Left cardiac atrium (tissue), 4 donors: ENCODE measurements at regions of chr1 and their contacts with region 1.

Region 1: GRCh38 chr1:202745323-202745888 is 35.2 kb upstream of the SYT2 start:
- DNase-seq: no peak
- ATAC-seq: no peak

Region 2: DNA sequence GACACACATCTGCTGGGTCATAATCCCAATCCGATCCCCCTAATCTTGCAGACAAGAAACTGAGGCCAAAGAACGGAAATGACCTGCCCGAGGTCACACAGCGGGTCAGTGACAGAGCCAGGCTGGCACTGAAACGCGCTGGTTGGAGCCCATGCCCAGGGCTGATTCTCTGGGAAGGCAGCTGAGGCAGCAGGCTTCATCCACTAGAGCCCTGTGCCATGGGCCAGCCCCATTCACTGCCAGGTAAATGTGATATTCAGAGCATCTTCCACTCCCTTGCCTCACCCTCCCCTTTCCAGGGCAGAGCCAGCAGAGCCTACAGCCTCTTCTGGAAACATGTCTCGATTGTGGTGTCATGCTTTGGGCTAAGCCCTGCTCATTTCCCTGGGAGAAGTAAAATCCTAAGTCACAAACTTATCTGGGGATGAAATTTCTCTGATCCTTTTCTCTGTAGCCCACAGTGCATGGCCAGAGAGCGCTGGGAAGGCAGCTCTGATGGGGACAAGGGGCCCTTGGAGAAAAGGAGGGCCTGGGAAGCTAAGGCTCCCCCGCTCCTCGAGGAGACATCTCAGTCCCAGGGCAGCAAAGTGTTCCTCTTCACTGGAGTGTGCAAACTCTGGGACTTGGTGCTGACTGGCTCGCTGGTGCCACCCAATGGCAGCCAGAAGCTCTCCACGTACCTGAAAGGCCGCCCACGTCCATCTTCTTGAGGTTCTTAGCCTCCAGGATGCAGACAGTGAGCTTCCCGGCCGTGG is 145.6 kb before region 1 on chr1:
- intact Hi-C with region 1: no loop called
- DNase-seq: peak; percentile 53
- ATAC-seq: peak; percentile 80 to 91

Region 3: DNA sequence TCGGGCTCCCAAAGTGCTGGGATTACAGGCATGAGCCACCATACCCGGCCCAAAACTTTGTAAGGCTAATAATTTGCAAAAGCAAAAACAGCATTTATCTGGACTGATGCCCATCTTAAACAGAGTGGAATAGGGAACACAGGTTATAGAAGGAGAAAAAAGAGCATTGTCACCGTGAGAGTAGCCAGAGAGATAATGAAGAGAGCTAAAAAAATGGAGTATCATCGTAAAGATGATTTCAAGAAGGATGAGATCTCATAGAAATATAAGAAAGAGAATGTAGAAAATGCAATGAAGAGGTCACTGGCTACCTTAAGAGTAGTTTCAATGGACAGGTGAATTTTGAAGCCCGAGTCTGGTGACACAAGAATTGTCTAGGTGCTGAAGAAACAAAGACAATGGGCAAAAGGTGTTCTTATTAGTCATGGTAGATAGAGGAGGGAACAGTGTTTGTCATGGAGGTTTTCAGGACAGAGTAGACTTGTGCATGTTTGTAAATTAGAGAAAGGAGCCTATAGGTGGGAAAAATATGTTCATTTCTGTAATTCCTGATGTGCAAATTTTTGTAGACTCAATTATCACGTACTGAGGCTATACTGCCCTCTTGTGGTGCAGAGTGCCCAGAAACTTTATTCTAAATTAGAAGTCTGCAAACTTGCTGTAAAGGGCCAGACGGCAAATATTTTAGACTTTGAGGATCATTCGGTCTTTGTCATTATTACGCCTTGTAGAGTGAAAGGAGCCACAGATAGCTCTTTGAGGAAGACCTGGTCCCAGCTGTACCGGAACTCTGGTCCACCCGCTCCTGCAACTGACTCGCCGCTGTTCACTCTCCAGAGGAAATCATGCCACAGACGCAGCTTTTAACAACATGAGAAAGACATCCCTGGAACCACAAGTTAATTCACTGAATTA is 253.7 kb after region 1 on chr1:
- intact Hi-C with region 1: loop called in 1 of 2 experiments (anchors 10 kb)
- DNase-seq: peak; percentile 47
- ATAC-seq: peak in 1 of 2 donors; percentile 30